Activated CD4-positive, alpha-beta T cell treated with anti-CD3 and anti-CD28 coated beads for 36 hours (primary cell): ENCODE measurements at regions of chr19 and their contacts with region 1.

Region 1: GRCh38 chr19:13117772-13118423 is at the start of gene NACC1:
- DNase-seq: peak; percentile 95
- ATAC-seq: peak; percentile 85
- H3K4me3 Mint-ChIP-seq: peak within 1 kb of the TSS; percentile 87
- H3K27ac Mint-ChIP-seq: peak within 1 kb of the TSS; percentile 95
- H3K4me1 Mint-ChIP-seq: peaks cover 49% of the 10 kb centered on the region
- H3K27me3 Mint-ChIP-seq: no peaks in the 10 kb centered on the region
- total RNA-seq, gene NACC1: 77.5 to 84.5 TPM

Region 2: GRCh38 chr19:13082192-13083007 is 35.5 kb before region 1 on chr19:
- CTCF ChIA-PET with region 1: no interaction called
- POLR2A ChIA-PET with region 1: no interaction called
- intact Hi-C with region 1: no loop called
- DNase-seq: no peak
- ATAC-seq: no peak
- H3K4me3 Mint-ChIP-seq: no peak overlapping the region
- H3K27ac Mint-ChIP-seq: no peak overlapping the region
- H3K4me1 Mint-ChIP-seq: no peaks in the 10 kb centered on the region
- H3K27me3 Mint-ChIP-seq: no peaks in the 10 kb centered on the region

Region 3: DNA sequence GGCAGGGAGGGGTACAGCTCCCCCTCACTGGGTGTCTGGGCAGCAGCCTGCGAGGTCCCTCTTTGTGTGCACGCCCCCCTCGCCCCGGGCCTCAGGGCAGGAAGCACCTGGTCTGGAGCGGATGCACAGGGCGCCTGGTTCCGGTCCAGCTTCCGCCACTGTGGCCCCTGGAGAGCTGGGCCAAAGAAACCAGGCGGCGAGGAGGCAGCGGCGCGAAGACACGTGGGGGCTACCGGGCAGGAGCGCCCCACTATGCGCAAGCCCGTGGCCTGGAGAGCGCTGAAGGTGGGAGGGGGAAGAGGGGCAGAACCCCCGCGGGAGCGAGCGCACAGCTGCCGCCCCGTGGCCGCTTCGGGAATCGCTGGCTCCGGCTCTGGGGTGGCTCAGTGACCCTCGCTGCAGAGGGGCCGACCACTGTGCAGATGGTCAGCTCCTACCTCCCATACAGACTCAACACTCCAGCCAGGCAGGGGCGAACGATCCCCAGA is 13.5 kb before region 1 on chr19:
- CTCF ChIA-PET with region 1: interaction called, 18 read pairs
- POLR2A ChIA-PET with region 1: no interaction called
- intact Hi-C with region 1: loop called (anchors 1 to 2 kb)
- DNase-seq: peak; percentile 84
- ATAC-seq: peak; percentile 48
- H3K4me3 Mint-ChIP-seq: peak overlapping the region; percentile 78
- H3K27ac Mint-ChIP-seq: peak overlapping the region; percentile 90
- H3K4me1 Mint-ChIP-seq: peaks cover 34% of the 10 kb centered on the region
- H3K27me3 Mint-ChIP-seq: no peaks in the 10 kb centered on the region